ENCODE measurements at regions of chr14 and their contacts with region 1.

Region 1: DNA sequence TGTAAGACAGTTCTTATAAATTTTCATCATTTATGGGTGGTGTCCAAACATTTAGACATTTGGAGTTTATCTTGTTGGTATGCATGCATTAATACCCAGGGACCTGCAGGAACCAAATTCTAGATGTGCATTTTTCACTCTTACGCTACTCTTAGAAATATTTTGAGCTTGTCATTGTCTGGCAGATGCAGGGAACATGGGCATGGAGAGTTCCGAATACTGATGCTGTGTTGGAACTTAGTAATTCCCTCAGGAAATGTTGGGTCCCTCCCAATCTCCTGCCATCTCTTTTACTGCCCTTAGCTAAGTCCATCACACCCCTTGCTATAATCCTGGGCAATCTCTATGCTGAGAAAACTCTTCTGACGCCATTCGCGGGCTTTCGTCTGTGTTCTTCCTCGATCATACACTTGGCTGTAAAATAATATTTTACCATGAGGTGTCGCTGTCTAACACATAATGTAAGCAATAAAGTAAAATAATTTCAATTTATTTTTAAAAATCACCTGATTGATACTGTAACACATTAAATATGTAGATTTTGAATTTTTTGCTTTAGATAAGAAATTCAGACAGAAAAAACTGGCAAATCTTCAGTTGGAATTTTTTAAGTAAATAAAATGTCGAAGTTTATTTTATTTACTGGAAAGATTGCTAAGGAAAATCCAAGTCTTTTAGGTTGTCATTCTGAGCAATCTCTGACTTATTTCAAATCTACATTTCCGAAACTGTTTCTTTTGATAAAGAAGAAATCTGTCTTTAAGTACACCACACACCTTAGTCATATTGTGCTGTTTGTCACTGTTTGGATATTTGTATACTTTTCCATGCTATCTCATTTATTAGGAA is 304.1 kb upstream of the SSTR1 start:
- DNase-seq: no peak
- H3K4me3 ChIP-seq: no peak overlapping the region
- H3K27me3 ChIP-seq: no peaks in the 10 kb centered on the region
- CTCF ChIP-seq: peak; percentile 46

Region 2: GRCh38 chr14:37753459-37753858 is 150.1 kb before region 1 on chr14:
- CTCF ChIA-PET with region 1: no interaction called
- POLR2A ChIA-PET with region 1: no interaction called
- DNase-seq: no peak
- H3K4me3 ChIP-seq: no peak overlapping the region
- H3K27me3 ChIP-seq: no peaks in the 10 kb centered on the region
- CTCF ChIP-seq: no peak

Region 3: GRCh38 chr14:37916302-37916701 is 12.7 kb after region 1 on chr14:
- CTCF ChIA-PET with region 1: interaction called, 10 read pairs
- POLR2A ChIA-PET with region 1: no interaction called
- DNase-seq: no peak
- H3K4me3 ChIP-seq: no peak overlapping the region
- H3K27me3 ChIP-seq: no peaks in the 10 kb centered on the region
- CTCF ChIP-seq: no peak

Region 4: GRCh38 chr14:38079268-38079667 is 175.7 kb after region 1 on chr14:
- CTCF ChIA-PET with region 1: no interaction called
- POLR2A ChIA-PET with region 1: no interaction called
- DNase-seq: peak; percentile 54
- H3K4me3 ChIP-seq: no peak overlapping the region
- H3K27me3 ChIP-seq: no peaks in the 10 kb centered on the region
- CTCF ChIP-seq: no peak

Region 5: GRCh38 chr14:38197001-38197783 is 293.6 kb after region 1 on chr14:
- CTCF ChIA-PET with region 1: interaction called, 14 read pairs
- POLR2A ChIA-PET with region 1: no interaction called
- DNase-seq: no peak
- H3K4me3 ChIP-seq: no peak overlapping the region
- H3K27me3 ChIP-seq: no peaks in the 10 kb centered on the region
- CTCF ChIP-seq: peak; percentile 53

Region 6: DNA sequence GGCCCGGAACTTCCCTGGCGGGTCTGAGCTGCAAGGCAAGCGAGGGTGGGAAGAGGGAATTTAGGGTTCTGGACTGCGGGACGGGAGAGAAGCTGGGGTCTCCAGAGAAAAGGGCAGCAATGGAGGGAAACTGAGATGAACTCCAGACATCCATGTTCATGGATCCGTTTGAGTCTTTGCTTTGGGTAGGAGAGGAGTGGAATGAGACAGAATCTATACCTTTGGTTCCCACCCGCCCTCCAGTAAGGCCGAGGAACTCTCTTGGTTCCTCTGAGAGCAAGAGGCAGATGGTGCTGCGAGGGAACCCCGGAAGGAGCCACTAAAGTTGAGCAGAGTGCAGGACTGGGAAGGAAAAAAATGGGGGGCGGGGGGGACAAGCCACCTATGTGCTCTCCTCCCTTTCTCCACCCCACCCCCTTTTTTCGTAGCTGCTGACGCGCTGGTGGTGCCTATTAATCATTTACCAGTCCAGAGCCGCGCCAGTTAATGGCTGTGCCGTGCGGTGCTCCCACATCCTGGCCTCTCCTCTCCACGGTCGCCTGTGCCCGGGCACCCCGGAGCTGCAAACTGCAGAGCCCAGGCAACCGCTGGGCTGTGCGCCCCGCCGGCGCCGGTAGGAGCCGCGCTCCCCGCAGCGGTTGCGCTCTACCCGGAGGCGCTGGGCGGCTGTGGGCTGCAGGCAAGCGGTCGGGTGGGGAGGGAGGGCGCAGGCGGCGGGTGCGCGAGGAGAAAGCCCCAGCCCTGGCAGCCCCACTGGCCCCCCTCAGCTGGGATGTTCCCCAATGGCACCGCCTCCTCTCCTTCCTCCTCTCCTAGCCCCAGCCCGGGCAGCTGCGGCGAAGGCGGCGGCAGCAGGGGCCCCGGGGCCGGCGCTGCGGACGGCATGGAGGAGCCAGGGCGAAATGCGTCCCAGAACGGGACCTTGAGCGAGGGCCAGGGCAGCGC is 305.3 kb after region 1 on chr14:
- CTCF ChIA-PET with region 1: interaction called, 17 read pairs
- POLR2A ChIA-PET with region 1: no interaction called
- DNase-seq: no peak
- H3K4me3 ChIP-seq: peak overlapping the region; percentile 85
- H3K27me3 ChIP-seq: no peaks in the 10 kb centered on the region
- CTCF ChIP-seq: peak; percentile 49

Region 7: GRCh38 chr14:38867561-38868150 is 964.1 kb after region 1 on chr14:
- CTCF ChIA-PET with region 1: interaction called, 46 read pairs
- POLR2A ChIA-PET with region 1: no interaction called
- DNase-seq: peak; percentile 1
- H3K4me3 ChIP-seq: no peak overlapping the region
- H3K27me3 ChIP-seq: no peaks in the 10 kb centered on the region
- CTCF ChIP-seq: peak; percentile 83